ENCODE measurements at regions of chr16 and their contacts with region 1.

Region 1: GRCh38 chr16:4693296-4693955 is at the start of gene NUDT16L1:
- DNase-seq: peak; percentile 97
- ATAC-seq: peak; percentile 94
- H3K4me3 Mint-ChIP-seq: peak within 1 kb of the TSS; percentile 80
- H3K27ac Mint-ChIP-seq: peak within 1 kb of the TSS; percentile 89
- H3K4me1 Mint-ChIP-seq: peaks cover 17% of the 10 kb centered on the region
- H3K27me3 Mint-ChIP-seq: no peaks in the 10 kb centered on the region
- total RNA-seq, gene NUDT16L1: 32.6 to 36.2 TPM

Region 2: GRCh38 chr16:4723071-4723767 is 29.8 kb after region 1 on chr16:
- CTCF ChIA-PET with region 1: no interaction called
- POLR2A ChIA-PET with region 1: no interaction called
- DNase-seq: no peak
- ATAC-seq: no peak
- H3K4me3 Mint-ChIP-seq: no peak overlapping the region
- H3K27ac Mint-ChIP-seq: no peak overlapping the region
- H3K4me1 Mint-ChIP-seq: no peaks in the 10 kb centered on the region
- H3K27me3 Mint-ChIP-seq: no peaks in the 10 kb centered on the region

Region 3: DNA sequence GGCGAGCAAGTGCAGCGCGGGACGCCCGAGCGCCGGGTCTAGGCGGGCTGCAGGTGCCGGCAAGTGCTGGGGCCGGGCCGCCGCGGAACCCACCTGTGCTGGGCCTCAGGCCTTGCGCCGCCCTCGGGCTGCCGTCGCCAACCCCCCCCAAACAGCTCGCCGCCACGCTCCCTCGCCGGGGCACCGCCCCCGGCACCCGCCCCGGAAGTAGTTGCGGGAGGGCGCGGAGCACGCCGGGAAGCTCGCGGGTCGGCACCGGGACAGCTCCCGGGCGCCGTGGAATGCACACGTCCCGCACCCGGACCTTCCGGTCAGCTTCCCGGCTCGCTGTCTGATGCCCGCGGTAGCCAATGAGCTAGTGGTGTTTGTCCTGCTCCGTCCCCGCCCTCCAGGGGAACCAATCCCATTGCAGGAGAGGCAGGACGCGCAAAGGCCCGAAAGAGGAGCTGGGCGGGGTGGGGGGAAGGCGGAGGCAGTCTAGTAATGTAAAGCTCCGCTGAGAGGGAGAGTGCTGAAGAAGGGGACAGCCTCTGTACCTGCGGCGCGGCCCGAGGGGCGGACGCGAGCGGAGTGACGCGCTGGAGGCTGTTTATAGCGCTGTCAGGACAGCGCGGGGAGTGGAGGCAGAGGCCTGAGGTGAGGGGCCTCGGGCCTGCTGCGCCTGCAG is 40.8 kb after region 1 on chr16 and contains the starts of genes ANKS3 and DNAAF8:
- CTCF ChIA-PET with region 1: interaction called, 4 read pairs
- POLR2A ChIA-PET with region 1: interaction called, 10 read pairs
- DNase-seq: peak; percentile 86
- ATAC-seq: peak; percentile 82
- H3K4me3 Mint-ChIP-seq: peak within 1 kb of the TSS; percentile 85
- H3K27ac Mint-ChIP-seq: peak within 1 kb of the TSS; percentile 92
- H3K4me1 Mint-ChIP-seq: peaks cover 18% of the 10 kb centered on the region
- H3K27me3 Mint-ChIP-seq: no peaks in the 10 kb centered on the region
- total RNA-seq, gene ANKS3: 17.0 to 17.2 TPM
- total RNA-seq, gene DNAAF8: 0.39 to 0.68 TPM

Measured in activated CD8-positive, alpha-beta T cell treated with anti-CD3 and anti-CD28 coated beads, Interleukin-2, amount 10 ng/mL, durations not matched to agents 7 days and 5 days (primary cell).